H1 (cell line): ENCODE measurements at regions of chr20 and their contacts with region 1.

Region 1: GRCh38 chr20:44080646-44081267 is 106.2 kb downstream of the JPH2 start:
- DNase-seq: peak; percentile 25 to 78
- H3K4me3 ChIP-seq: no peak overlapping the region
- H3K27ac ChIP-seq: no peak overlapping the region
- H3K4me1 ChIP-seq: no peaks in the 10 kb centered on the region
- H3K27me3 ChIP-seq: no peaks in the 10 kb centered on the region
- CTCF ChIP-seq: peak; percentile 78 to 98 (median 92)
- EP300 ChIP-seq: no peak
- POLR2A ChIP-seq: no peak
- RAD21 ChIP-seq: peak; percentile 98 to 99

Region 2: DNA sequence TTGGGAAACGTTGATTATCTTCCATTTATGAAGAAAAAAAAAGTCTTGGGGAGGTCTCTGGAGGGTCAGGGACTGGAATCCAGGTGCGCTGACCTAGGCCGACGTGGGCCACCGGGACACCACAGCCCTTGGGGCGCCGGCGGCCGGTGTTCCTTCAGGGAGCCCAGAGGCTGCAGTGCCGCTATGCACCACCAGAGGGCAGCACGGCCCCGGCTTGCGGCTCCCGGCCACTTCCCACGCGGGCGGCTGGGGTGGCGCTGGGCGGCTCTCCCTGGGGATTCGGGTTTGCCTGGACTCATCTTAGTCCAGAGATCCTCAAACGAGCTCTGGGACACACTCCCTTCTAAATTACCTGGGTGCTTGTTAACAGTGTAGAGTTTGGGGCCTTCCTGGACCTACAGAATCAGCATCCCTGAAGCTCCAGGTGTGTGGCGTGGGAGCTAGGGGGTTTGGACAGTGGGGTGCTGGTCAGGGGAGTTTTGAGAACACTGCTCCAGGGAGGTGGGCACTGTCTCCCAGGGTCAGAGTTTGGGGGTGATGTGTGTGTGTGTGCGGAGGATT is 330.9 kb before region 1 on chr20:
- CTCF ChIA-PET with region 1: interaction called, 22 read pairs
- POLR2A ChIA-PET with region 1: no interaction called
- DNase-seq: peak; percentile 53 to 100
- H3K4me3 ChIP-seq: no peak overlapping the region
- H3K27ac ChIP-seq: no peak overlapping the region
- H3K4me1 ChIP-seq: peaks cover 0 to 4% (median 1%) of the 10 kb centered on the region in 4 experiments; a peak in 2 of 7 replicates
- H3K27me3 ChIP-seq: no peaks in the 10 kb centered on the region
- CTCF ChIP-seq: peak; percentile 94 to 97 (median 95)
- EP300 ChIP-seq: no peak
- POLR2A ChIP-seq: no peak
- RAD21 ChIP-seq: peak; percentile 96 to 98

Region 3: GRCh38 chr20:43977252-43977651 is 103.5 kb before region 1 on chr20:
- CTCF ChIA-PET with region 1: interaction called, 12 read pairs
- POLR2A ChIA-PET with region 1: no interaction called
- DNase-seq: no peak
- H3K4me3 ChIP-seq: no peak overlapping the region
- H3K27ac ChIP-seq: no peak overlapping the region
- H3K4me1 ChIP-seq: no peaks in the 10 kb centered on the region
- H3K27me3 ChIP-seq: no peaks in the 10 kb centered on the region
- CTCF ChIP-seq: no peak
- EP300 ChIP-seq: no peak
- POLR2A ChIP-seq: no peak
- RAD21 ChIP-seq: no peak

Region 4: DNA sequence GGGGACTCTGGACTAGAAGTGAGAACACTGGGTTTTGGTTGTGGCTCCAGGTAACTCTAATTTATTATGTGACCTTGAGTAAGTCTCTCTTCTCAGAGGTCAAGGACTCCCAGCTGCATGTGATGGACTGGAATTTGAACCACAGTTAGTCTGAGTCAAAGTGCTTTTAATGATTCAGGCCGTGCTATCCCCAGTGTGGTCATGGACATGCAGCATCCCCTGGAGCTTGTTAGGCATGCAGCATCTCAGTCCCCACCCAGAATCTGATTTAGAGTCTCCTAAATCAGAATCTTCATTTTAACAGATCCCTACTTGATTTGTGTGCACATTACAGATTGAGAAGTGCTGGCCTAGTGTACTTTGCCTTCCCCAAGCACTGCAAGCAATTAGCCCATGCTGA is 91.9 kb before region 1 on chr20:
- CTCF ChIA-PET with region 1: no interaction called
- POLR2A ChIA-PET with region 1: no interaction called
- DNase-seq: no peak
- H3K4me3 ChIP-seq: no peak overlapping the region
- H3K27ac ChIP-seq: no peak overlapping the region
- H3K4me1 ChIP-seq: no peaks in the 10 kb centered on the region
- H3K27me3 ChIP-seq: no peaks in the 10 kb centered on the region
- CTCF ChIP-seq: no peak
- EP300 ChIP-seq: no peak
- POLR2A ChIP-seq: no peak
- RAD21 ChIP-seq: no peak

Region 5: GRCh38 chr20:44033344-44033743 is 47.4 kb before region 1 on chr20:
- CTCF ChIA-PET with region 1: no interaction called
- POLR2A ChIA-PET with region 1: no interaction called
- DNase-seq: no peak
- H3K4me3 ChIP-seq: no peak overlapping the region
- H3K27ac ChIP-seq: no peak overlapping the region
- H3K4me1 ChIP-seq: no peaks in the 10 kb centered on the region; a peak in 1 of 7 replicates
- H3K27me3 ChIP-seq: no peaks in the 10 kb centered on the region
- CTCF ChIP-seq: no peak
- EP300 ChIP-seq: no peak
- POLR2A ChIP-seq: no peak
- RAD21 ChIP-seq: no peak

Region 6: DNA sequence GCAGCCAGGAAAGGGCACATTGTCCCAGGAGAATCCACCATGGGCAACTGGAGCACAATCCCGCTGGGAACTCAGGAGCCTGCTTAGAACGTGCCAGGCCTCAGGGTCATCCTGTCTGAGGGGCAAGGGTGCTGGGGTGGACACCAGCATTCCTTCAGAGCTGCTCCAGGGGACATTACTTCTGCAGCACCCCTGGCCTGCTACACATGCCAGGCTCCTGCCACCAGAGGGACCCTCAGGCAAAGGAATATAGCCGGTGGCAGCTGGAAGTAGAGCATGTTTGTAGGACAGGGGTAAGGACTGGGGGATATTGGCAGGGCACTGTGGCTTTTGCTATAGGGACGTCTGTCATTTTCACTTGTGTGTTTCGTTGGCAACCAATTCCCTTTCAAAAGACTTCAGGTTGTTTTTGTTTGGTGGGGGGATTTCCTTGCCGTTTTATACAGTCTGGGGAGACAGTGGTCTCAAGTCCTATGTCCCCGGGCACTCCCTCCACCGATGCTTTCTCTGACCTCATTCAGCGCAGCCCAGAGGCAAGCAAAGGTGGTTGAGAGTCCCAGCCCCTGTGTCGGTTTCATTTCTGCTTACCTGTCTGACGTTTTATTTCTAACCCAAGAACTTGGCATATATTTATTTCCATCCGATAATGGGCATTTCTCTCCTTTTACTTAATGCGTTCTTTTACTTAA is 24.6 kb before region 1 on chr20:
- CTCF ChIA-PET with region 1: interaction called, 98 read pairs
- POLR2A ChIA-PET with region 1: no interaction called
- DNase-seq: peak; percentile 29 to 69
- H3K4me3 ChIP-seq: no peak overlapping the region
- H3K27ac ChIP-seq: no peak overlapping the region
- H3K4me1 ChIP-seq: no peaks in the 10 kb centered on the region
- H3K27me3 ChIP-seq: no peaks in the 10 kb centered on the region
- CTCF ChIP-seq: peak; percentile 82 to 91 (median 84)
- EP300 ChIP-seq: no peak
- POLR2A ChIP-seq: no peak
- RAD21 ChIP-seq: peak; percentile 91 to 96

Region 7: GRCh38 chr20:44069203-44070011 is 11.3 kb before region 1 on chr20:
- CTCF ChIA-PET with region 1: interaction called, 19 read pairs
- POLR2A ChIA-PET with region 1: no interaction called
- DNase-seq: peak in 1 of 2 experiments; percentile 22
- H3K4me3 ChIP-seq: no peak overlapping the region
- H3K27ac ChIP-seq: no peak overlapping the region
- H3K4me1 ChIP-seq: peaks cover 0 to 7% (median 1%) of the 10 kb centered on the region in 4 experiments; a peak in 3 of 7 replicates
- H3K27me3 ChIP-seq: no peaks in the 10 kb centered on the region; a peak in 1 of 7 replicates
- CTCF ChIP-seq: no peak
- EP300 ChIP-seq: no peak
- POLR2A ChIP-seq: no peak
- RAD21 ChIP-seq: no peak

Region 8: DNA sequence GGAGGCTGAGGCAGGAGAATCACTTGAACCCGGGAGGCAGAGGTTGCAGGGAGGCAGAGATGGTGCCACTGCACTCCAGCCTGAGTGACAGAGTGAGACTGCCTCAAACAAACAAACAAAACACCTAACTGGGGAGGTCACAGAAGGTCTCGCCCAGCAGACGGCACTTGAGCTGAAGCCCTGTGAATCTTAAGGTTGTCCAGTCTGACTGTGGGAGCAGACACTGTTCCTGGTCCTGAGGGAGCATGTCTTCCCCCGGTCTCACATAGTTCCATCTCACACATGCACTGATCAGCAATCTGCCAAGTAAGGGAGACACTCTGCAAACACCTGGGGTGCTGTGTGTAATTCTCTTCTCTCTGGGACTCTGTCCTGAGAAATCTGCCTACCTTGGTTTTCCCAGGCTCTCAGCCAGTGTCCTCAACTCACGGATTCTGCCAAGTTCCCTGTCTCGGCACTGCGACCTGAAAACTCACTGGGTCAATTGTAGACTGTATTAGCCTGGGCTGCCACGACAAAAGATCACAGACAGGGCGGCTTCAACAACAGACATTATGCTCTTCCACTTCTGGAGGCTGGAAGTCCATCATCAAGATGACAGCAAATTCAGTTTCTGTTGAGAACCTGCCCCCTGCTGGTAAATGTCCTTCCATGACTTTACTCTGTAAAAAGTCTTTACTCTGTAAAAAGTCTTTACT is 11.9 kb after region 1 on chr20:
- CTCF ChIA-PET with region 1: interaction called, 15 read pairs
- POLR2A ChIA-PET with region 1: no interaction called
- DNase-seq: no peak
- H3K4me3 ChIP-seq: no peak overlapping the region
- H3K27ac ChIP-seq: no peak overlapping the region
- H3K4me1 ChIP-seq: no peaks in the 10 kb centered on the region
- H3K27me3 ChIP-seq: no peaks in the 10 kb centered on the region
- CTCF ChIP-seq: peak in 2 of 3 experiments; percentile 25 to 44; a peak in 2 of 4 replicates
- EP300 ChIP-seq: no peak
- POLR2A ChIP-seq: no peak
- RAD21 ChIP-seq: peak; percentile 43 to 45